ENCODE measurements at regions of chr12 and their contacts with region 1.

Region 1: GRCh38 chr12:80269803-80270552 is 170.6 kb downstream of the OTOGL start:
- DNase-seq: no peak
- ATAC-seq: no peak

Region 2: GRCh38 chr12:79407671-79408622 is 862.0 kb before region 1 on chr12:
- intact Hi-C with region 1: loop called in 1 of 2 experiments (anchors 10 kb)
- DNase-seq: peak; percentile 60 to 61
- ATAC-seq: peak; percentile 99

Region 3: DNA sequence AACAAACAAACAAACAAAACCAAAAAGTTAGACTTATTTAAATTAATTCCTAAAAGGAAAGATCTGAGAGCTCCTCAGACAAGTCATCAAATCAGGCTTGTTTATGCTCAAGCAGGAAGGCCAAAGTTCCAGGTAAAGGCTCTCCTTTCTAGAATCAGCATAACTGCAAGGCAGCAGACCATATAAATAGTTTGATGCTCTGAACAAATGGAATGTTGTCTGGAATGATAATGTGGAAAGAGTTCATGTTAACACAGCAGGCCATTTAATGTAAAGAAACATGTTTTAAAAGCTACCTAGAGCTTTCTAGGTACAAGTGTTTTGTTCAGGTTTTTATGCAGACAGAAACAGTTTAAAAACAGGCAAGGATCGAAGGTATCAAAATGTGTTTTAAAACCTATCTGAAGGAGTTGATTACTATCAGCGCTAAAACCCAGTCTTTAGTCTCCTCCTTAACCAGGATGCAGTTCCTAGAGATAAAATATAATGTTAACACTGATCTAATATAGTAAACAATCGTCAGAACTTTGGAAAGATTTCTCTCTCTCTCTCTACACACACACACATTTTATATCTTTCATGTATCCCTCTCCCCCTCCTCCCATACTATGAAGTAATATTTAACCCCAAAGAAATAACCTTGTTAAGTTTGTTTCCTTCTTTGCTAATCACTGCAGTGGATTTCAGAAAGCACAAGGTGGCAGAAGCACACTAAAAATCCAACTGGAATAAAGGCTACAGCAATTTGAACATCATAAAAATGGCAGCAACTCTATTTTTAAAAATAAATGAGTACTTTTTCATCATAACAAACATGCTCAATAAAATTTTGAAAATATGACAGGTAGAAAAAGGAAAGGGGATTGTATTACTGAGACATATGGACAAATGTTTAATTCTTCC is 714.7 kb before region 1 on chr12:
- intact Hi-C with region 1: loop called in 1 of 2 experiments (anchors 10 kb)
- DNase-seq: no peak
- ATAC-seq: peak; percentile 80